ENCODE measurements at regions of chr11 and their contacts with region 1.

Region 1: GRCh38 chr11:14907411-14908213 is 15.6 kb upstream of the CYP2R1 start:
- DNase-seq: peak; percentile 85
- ATAC-seq: peak; percentile 37
- H3K4me3 ChIP-seq: no peak overlapping the region
- H3K4me3 Mint-ChIP-seq: no peak overlapping the region
- H3K27ac ChIP-seq: no peak overlapping the region
- H3K27ac Mint-ChIP-seq: peak overlapping the region; percentile 70
- H3K4me1 ChIP-seq: peaks cover 32 to 44% of the 10 kb centered on the region in 2 donors
- H3K4me1 Mint-ChIP-seq: peaks cover 45% of the 10 kb centered on the region
- H3K27me3 ChIP-seq: peaks cover 0 to 4% (median 0%) of the 10 kb centered on the region in 4 experiments
- H3K27me3 Mint-ChIP-seq: peaks cover 2% of the 10 kb centered on the region
- CTCF ChIP-seq: peak; percentile 81

Region 2: DNA sequence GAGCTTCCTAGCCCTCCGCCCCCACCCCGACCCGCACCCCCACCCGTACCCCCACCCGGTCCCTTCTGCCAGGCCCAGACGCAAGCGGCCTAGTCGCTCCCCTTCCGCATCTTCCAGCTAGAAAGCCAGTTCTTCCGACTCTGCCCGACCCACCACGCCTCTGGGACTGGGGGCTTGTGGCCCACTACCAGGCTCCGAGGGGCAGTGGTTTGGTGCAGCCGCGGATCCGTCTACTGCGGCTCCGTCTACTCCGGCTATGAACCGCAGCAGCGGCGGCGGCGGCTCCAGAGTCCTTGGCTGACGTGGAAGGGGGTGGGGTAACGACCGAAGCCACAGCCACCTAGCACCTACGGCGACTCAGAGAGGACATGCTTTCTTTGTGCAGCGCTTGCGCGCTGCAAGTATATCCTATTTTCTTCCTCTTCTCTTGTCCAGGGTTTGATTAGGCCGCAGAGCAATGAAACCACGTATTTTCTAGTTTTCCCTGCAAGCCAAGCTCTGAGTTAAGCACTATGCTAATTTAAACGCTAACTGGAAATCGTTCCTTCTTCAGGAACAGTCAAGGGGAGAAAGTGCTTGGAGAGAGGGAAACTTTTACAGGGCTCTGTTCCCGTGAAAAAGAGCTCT is 407.9 kb before region 1 on chr11 and contains the start of gene COPB1:
- CTCF ChIA-PET with region 1: interaction called, 58 read pairs
- POLR2A ChIA-PET with region 1: interaction called, 6 read pairs
- intact Hi-C with region 1: loop called (anchors 1 kb)
- DNase-seq: peak; percentile 95
- ATAC-seq: peak; percentile 96
- H3K4me3 ChIP-seq: peak within 1 kb of the TSS; percentile 75 to 91 (median 86)
- H3K4me3 Mint-ChIP-seq: peak within 1 kb of the TSS; percentile 97
- H3K27ac ChIP-seq: peak within 1 kb of the TSS; percentile 76 to 85
- H3K27ac Mint-ChIP-seq: peak within 1 kb of the TSS; percentile 94
- H3K4me1 ChIP-seq: peaks cover 6 to 10% of the 10 kb centered on the region in 2 donors
- H3K4me1 Mint-ChIP-seq: peaks cover 36% of the 10 kb centered on the region
- H3K27me3 ChIP-seq: no peaks in the 10 kb centered on the region
- H3K27me3 Mint-ChIP-seq: no peaks in the 10 kb centered on the region
- CTCF ChIP-seq: no peak
- total RNA-seq, gene COPB1: 80.2 and 87.6 TPM in 2 replicates

Region 3: GRCh38 chr11:14554959-14555358 is 352.7 kb before region 1 on chr11:
- CTCF ChIA-PET with region 1: interaction called, 14 read pairs
- POLR2A ChIA-PET with region 1: no interaction called
- intact Hi-C with region 1: no loop called
- DNase-seq: no peak
- ATAC-seq: no peak
- H3K4me3 ChIP-seq: no peak overlapping the region
- H3K4me3 Mint-ChIP-seq: no peak overlapping the region
- H3K27ac ChIP-seq: no peak overlapping the region
- H3K27ac Mint-ChIP-seq: no peak overlapping the region
- H3K4me1 ChIP-seq: no peaks in the 10 kb centered on the region
- H3K4me1 Mint-ChIP-seq: peaks cover 5% of the 10 kb centered on the region
- H3K27me3 ChIP-seq: no peaks in the 10 kb centered on the region
- H3K27me3 Mint-ChIP-seq: peaks cover 43% of the 10 kb centered on the region
- CTCF ChIP-seq: no peak

Region 4: DNA sequence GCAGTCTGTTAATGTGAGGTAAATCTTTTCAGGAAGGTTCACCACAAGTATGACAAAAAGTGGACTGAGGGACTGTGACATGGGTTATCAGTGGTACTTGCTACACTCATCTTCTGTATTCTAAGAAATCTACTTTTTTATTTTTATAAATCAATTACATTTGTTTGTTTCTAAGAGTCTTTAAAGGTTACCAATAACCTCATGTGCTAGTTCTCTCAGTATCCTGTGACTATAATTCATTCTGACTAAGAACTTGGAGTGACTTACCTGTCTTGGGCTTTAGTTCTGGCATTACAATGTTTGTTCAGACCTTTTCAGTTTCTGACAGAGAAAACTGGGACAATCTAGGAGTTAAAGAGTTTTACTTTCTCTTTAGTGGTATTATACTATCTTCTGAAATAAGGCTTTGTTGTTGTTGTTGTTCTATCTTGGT is 155.6 kb before region 1 on chr11:
- CTCF ChIA-PET with region 1: interaction called, 10 read pairs
- POLR2A ChIA-PET with region 1: no interaction called
- intact Hi-C with region 1: no loop called
- DNase-seq: no peak
- ATAC-seq: no peak
- H3K4me3 ChIP-seq: no peak overlapping the region
- H3K4me3 Mint-ChIP-seq: no peak overlapping the region
- H3K27ac ChIP-seq: no peak overlapping the region
- H3K27ac Mint-ChIP-seq: no peak overlapping the region
- H3K4me1 ChIP-seq: no peaks in the 10 kb centered on the region
- H3K4me1 Mint-ChIP-seq: no peaks in the 10 kb centered on the region
- H3K27me3 ChIP-seq: peaks cover 0 to 3% (median 0%) of the 10 kb centered on the region in 4 experiments
- H3K27me3 Mint-ChIP-seq: peaks cover 4% of the 10 kb centered on the region
- CTCF ChIP-seq: no peak

Region 5: GRCh38 chr11:14852571-14853177 is 54.9 kb before region 1 on chr11:
- CTCF ChIA-PET with region 1: no interaction called
- POLR2A ChIA-PET with region 1: no interaction called
- intact Hi-C with region 1: no loop called
- DNase-seq: no peak
- ATAC-seq: no peak
- H3K4me3 ChIP-seq: no peak overlapping the region
- H3K4me3 Mint-ChIP-seq: no peak overlapping the region
- H3K27ac ChIP-seq: no peak overlapping the region
- H3K27ac Mint-ChIP-seq: no peak overlapping the region
- H3K4me1 ChIP-seq: no peaks in the 10 kb centered on the region
- H3K4me1 Mint-ChIP-seq: no peaks in the 10 kb centered on the region
- H3K27me3 ChIP-seq: no peaks in the 10 kb centered on the region
- H3K27me3 Mint-ChIP-seq: peaks cover 8% of the 10 kb centered on the region
- CTCF ChIP-seq: no peak

Region 6: GRCh38 chr11:14892036-14892567 is 15.5 kb before region 1 on chr11 and contains the start of gene CYP2R1:
- CTCF ChIA-PET with region 1: interaction called, 155 read pairs
- POLR2A ChIA-PET with region 1: interaction called, 29 read pairs
- intact Hi-C with region 1: loop called (anchors 1 kb)
- DNase-seq: peak; percentile 93
- ATAC-seq: peak; percentile 85
- H3K4me3 ChIP-seq: peak within 1 kb of the TSS; percentile 82 to 91 (median 87)
- H3K4me3 Mint-ChIP-seq: peak within 1 kb of the TSS; percentile 99
- H3K27ac ChIP-seq: peak within 1 kb of the TSS; percentile 78 to 83
- H3K27ac Mint-ChIP-seq: peak within 1 kb of the TSS; percentile 97
- H3K4me1 ChIP-seq: peaks cover 4 to 5% of the 10 kb centered on the region in 2 donors
- H3K4me1 Mint-ChIP-seq: peaks cover 30% of the 10 kb centered on the region
- H3K27me3 ChIP-seq: no peaks in the 10 kb centered on the region
- H3K27me3 Mint-ChIP-seq: no peaks in the 10 kb centered on the region
- CTCF ChIP-seq: no peak
- total RNA-seq, gene CYP2R1: 42.4 and 43.6 TPM in 2 replicates

Region 7: DNA sequence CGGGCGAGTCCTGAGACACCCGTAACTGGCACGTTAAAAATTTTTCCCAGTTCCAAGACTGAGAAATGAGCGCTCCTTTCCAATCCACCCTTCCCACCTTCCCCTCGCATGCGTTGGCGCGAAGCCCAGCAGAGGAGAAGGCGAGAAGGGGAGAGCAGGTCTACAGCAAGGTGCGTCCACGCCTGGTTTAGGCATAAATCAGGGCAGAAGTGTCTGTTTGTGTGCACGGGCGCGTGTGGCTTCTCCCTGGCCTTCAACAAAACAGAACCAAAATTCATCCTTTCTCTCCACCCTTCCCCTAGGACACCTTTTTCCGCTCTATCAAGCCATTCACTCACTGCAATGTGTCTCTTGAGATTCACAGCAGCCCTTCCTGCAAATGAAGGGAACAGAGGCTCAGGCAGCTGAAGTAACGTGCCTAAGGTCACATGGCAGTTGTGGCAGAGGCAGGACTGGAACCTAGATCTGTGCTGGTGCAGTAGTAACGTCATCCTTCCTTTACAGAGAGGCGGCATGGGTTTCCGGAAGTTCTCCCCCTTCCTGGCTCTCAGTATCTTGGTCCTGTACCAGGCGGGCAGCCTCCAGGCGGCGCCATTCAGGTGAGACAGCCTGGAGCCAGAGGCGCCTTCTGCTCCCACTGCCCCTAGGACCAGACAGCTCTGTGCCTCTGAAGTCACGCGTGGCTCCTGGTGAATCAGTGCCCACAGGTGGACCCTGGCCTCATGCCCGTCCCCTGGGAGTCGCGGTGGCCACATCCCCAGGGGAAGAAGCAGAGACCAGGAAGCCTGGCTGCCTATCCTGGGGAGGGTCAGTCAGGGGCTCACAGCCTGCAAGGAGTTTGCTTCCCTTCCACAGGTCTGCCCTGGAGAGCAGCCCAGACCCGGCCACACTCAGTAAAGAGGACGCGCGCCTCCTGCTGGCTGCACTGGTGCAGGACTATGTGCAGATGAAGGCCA is 166.9 kb after region 1 on chr11:
- CTCF ChIA-PET with region 1: interaction called, 129 read pairs
- POLR2A ChIA-PET with region 1: interaction called, 3 read pairs
- intact Hi-C with region 1: loop called (anchors 1 kb)
- DNase-seq: peak; percentile 78
- ATAC-seq: peak; percentile 82
- H3K4me3 ChIP-seq: peak overlapping the region in 4 of 5 experiments; percentile 20 to 51 (median 28)
- H3K4me3 Mint-ChIP-seq: peak overlapping the region; percentile 75
- H3K27ac ChIP-seq: no peak overlapping the region
- H3K27ac Mint-ChIP-seq: peak overlapping the region; percentile 41
- H3K4me1 ChIP-seq: peaks cover 19% of the 10 kb centered on the region in 2 donors
- H3K4me1 Mint-ChIP-seq: peaks cover 17% of the 10 kb centered on the region
- H3K27me3 ChIP-seq: peaks cover 0 to 52% (median 16%) of the 10 kb centered on the region in 4 experiments
- H3K27me3 Mint-ChIP-seq: peaks cover 60% of the 10 kb centered on the region
- CTCF ChIP-seq: peak; percentile 75

Region 8: DNA sequence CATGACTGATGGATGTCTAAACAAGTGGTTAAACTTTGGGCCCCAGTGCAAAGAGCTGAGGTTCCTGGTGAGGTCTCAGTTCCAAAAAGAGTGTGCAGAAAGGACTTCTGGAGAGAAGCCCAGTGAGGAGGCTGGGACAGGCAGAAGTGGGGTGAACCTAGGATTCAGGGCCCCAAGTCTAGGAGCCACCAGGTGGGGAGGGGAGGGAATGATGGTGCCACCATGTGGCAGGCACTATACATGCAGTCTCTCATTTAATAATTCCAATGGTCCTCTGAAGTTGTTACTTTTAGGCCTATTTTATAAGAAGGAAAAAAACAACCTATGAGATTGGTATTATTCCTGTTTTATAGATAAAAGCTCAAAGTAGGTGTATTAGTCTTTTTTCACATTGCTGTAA is 309.1 kb after region 1 on chr11:
- CTCF ChIA-PET with region 1: interaction called, 119 read pairs
- POLR2A ChIA-PET with region 1: no interaction called
- intact Hi-C with region 1: no loop called
- DNase-seq: peak; percentile 12
- ATAC-seq: no peak
- H3K4me3 ChIP-seq: no peak overlapping the region
- H3K4me3 Mint-ChIP-seq: no peak overlapping the region
- H3K27ac ChIP-seq: no peak overlapping the region
- H3K27ac Mint-ChIP-seq: no peak overlapping the region
- H3K4me1 ChIP-seq: no peaks in the 10 kb centered on the region
- H3K4me1 Mint-ChIP-seq: no peaks in the 10 kb centered on the region
- H3K27me3 ChIP-seq: peaks cover 0 to 3% (median 0%) of the 10 kb centered on the region in 4 experiments
- H3K27me3 Mint-ChIP-seq: no peaks in the 10 kb centered on the region
- CTCF ChIP-seq: no peak